IMR-90 (cell line): ENCODE measurements at regions of chr6 and their contacts with region 1.

Region 1: DNA sequence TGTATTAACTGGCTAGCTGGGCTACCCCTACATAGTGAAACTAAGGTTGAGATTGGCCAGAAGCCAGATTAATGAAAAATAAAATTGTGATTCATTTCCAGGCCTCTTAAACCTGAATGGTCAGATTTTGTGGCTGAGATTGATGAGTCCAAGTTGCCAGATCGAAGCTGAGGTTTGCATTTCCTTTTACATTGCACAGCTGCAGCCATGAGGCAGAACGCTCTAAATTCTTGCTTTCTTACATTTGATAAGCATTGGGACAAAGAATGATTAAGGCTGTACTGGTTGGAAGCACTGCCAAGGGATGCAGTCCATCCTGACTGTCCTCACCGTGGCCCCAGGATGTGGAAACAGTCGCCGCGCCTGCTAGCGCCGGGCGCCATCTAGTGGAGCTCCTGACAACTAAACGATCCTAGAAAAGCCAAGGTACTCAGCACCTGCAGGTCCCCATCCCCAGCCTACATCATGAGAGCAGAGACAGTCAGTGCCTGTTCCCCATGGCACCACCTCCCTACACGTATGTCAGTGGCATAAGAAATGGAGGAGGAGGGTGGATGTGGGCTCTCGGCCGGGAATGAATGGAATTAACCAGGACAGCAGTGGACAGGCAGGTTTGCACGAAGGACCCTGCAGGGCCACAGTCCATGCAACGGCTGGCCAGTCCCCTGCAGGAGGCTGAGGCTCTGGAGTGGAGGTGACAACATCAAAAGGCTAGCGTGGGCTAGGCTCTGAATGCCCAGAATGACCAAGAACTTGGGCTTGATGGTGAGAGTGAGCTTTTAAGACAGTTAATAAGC is 19.0 kb downstream of the PXDC1 start:
- DNase-seq: peak; percentile 94
- ATAC-seq: peak; percentile 93
- H3K4me3 ChIP-seq: no peak overlapping the region
- H3K27ac ChIP-seq: no peak overlapping the region; the same call in 1 of the 2 replicates
- H3K4me1 ChIP-seq: peaks cover 7% of the 10 kb centered on the region
- H3K27me3 ChIP-seq: no peaks in the 10 kb centered on the region
- CTCF ChIP-seq: peak; percentile 93
- POLR2A ChIP-seq: no peak; the same call in 1 of the 2 replicates
- RAD21 ChIP-seq: peak; percentile 97

Region 2: GRCh38 chr6:2999618-3000557 is 732.7 kb before region 1 on chr6 and contains the start of gene NQO2:
- CTCF ChIA-PET with region 1: no interaction called
- POLR2A ChIA-PET with region 1: no interaction called
- dilution Hi-C with region 1: no loop called
- in situ Hi-C with region 1: no loop called
- intact Hi-C with region 1: loop called (anchors 5 kb)
- DNase-seq: peak; percentile 73
- ATAC-seq: peak; percentile 97
- H3K4me3 ChIP-seq: peak within 1 kb of the TSS; percentile 78
- H3K27ac ChIP-seq: peak within 1 kb of the TSS; percentile 58
- H3K4me1 ChIP-seq: peaks cover 5% of the 10 kb centered on the region
- H3K27me3 ChIP-seq: no peaks in the 10 kb centered on the region
- CTCF ChIP-seq: 0 out of 2 replicates have a peak, but pooled peaks have one; percentile 0
- POLR2A ChIP-seq: peak; percentile 82
- RAD21 ChIP-seq: no peak
- total RNA-seq, gene NQO2: 59.4 and 72.1 TPM in 2 replicates

Region 3: DNA sequence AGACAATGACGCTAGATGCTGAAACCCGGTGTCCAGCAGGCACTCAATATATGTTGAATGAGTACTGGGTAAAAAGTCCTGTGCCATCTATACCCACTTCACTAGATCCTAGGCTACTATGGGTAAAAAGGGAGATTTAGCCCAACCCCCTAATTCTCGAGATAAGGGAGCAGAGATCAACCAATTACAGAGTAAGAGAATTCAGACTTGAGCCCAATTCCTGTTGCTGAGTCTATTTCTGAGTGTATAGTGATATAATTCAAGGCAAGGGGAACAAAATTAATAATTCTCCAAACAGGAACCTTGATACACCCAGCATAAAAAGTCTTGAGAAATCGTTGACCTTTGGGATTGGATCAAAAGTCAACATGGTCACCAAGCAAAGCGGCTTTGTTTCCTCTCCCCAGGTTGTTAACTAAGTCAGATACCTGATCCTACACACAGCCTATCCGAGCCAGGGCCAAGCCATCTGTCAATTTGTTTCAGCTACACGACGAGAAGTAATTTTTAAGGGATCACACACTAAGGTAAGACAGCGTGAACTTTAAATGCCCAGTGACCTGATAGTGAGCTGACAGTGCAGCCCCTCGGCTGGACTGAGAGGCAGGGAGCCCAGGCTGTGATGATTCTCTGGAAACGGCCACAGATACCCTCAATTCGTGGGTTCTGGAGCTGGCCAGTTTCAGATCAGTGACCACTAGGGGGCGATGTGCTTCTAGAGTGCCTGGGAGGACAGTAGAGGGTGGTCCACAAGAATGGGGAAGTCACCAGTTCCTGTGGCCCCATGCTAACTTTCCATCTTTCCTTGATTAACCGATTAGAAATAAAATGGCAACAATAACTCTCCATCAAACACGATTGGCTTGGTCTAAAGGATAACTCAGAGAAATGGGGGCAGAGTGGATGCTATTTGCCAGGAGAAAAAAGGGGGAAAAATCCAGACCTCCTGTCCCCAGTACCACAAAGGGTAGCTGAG is 321.9 kb before region 1 on chr6:
- CTCF ChIA-PET with region 1: interaction called, 3 read pairs
- POLR2A ChIA-PET with region 1: no interaction called
- dilution Hi-C with region 1: no loop called
- in situ Hi-C with region 1: loop called (anchors 5 kb)
- intact Hi-C with region 1: loop called (anchors 1 kb)
- DNase-seq: peak; percentile 57
- ATAC-seq: peak; percentile 62
- H3K4me3 ChIP-seq: no peak overlapping the region
- H3K27ac ChIP-seq: no peak overlapping the region
- H3K4me1 ChIP-seq: no peaks in the 10 kb centered on the region
- H3K27me3 ChIP-seq: peaks cover 15% of the 10 kb centered on the region
- CTCF ChIP-seq: peak; percentile 66
- POLR2A ChIP-seq: no peak
- RAD21 ChIP-seq: peak; percentile 72

Region 4: DNA sequence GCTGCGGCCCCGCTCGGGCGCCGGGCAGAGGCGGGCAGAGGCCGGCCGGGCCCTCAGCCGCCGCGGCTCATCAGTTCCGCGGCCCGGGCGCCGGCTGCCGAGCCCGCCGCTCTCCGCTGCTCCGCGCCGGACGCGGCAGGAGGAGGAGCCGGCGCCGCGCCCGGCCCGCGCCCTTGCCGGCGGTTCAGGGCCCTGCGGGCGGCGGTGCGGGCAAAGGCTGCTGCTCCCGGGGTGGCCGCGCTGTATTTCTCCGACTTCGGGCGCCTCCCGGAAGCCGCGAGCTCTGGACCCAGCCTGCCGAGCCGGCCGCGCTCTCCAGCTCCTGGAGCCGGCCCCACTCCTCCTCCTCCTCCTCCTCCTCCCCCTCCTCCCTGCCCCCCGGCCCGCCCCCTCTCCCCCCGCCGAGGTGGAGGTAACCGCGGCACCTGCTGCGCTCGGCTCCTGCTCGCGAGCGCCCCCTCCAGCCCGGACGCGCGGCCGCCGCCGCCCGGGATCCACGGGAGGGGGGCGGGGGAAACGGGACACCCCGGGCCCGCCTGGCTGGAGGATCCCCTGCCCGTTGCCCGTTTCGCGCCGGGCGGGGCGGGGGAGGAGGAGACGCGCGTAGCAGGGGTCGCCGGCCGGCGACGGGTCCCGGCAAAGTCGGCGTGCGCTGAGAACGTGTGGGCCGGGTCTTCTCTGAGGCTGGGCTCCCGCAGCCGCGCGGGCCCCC is 275.6 kb before region 1 on chr6 and contains the start of gene SLC22A23:
- CTCF ChIA-PET with region 1: no interaction called
- POLR2A ChIA-PET with region 1: no interaction called
- dilution Hi-C with region 1: no loop called
- in situ Hi-C with region 1: no loop called
- intact Hi-C with region 1: loop called (anchors 2 kb)
- DNase-seq: no peak
- ATAC-seq: peak; percentile 72
- H3K4me3 ChIP-seq: peak within 1 kb of the TSS; percentile 36
- H3K27ac ChIP-seq: no peak within 1 kb of the TSS
- H3K4me1 ChIP-seq: peaks cover 2% of the 10 kb centered on the region; the same call in 1 of the 2 replicates
- H3K27me3 ChIP-seq: peaks cover 63% of the 10 kb centered on the region
- CTCF ChIP-seq: peak; percentile 59
- POLR2A ChIP-seq: no peak
- RAD21 ChIP-seq: peak; percentile 41
- total RNA-seq, gene SLC22A23: 0.56 and 0.72 TPM in 2 replicates

Region 5: GRCh38 chr6:3522561-3523250 is 209.8 kb before region 1 on chr6:
- CTCF ChIA-PET with region 1: interaction called, 3 read pairs
- POLR2A ChIA-PET with region 1: no interaction called
- dilution Hi-C with region 1: no loop called
- in situ Hi-C with region 1: no loop called
- intact Hi-C with region 1: loop called (anchors 1 kb)
- DNase-seq: peak; percentile 91
- ATAC-seq: peak; percentile 70
- H3K4me3 ChIP-seq: no peak overlapping the region
- H3K27ac ChIP-seq: peak overlapping the region; percentile 93
- H3K4me1 ChIP-seq: peaks cover 27% of the 10 kb centered on the region
- H3K27me3 ChIP-seq: 0 out of 2 replicates have a peak, but pooled peaks cover 2% of the 10 kb centered on the region
- CTCF ChIP-seq: no peak
- POLR2A ChIP-seq: no peak
- RAD21 ChIP-seq: no peak